ENCODE measurements at regions of chr17 and their contacts with region 1.

Region 1: DNA sequence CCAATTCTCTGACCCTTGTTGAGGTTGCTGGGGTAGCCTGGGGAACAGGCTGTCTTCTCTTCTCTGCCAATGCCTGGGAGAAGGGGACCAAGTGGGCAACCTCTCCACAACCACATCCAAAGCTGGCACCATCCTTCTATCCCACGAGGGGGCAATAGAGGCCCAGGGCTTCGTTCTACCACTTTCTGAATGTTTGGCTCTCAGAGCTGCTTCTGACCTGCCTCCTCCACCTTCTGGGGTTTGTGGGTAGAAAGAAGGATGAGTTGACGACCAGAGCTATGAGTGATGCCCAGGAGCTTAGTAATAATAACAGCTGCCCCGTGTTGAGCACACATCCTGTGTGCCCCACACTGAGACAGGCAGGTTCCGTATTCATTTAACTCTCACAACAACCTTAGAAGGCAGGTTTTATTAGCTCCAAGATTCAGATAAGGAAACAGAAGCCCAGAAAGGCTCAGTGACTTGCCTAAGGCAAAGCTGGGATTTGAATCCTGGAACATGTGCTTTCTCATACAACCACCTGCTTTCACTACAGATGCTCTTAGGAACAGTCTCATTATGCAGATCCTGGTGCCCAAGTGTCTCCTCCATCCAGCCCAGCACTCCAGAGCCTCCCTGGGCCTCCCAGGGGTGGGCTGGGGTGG is 11.1 kb downstream of the TSPOAP1 start:
- DNase-seq: peak; percentile 81

Region 2: GRCh38 chr17:58136669-58137283 is 180.8 kb before region 1 on chr17:
- CTCF ChIA-PET with region 1: no interaction called
- POLR2A ChIA-PET with region 1: no interaction called
- DNase-seq: peak; percentile 69

Region 3: GRCh38 chr17:58303971-58304725 is 13.4 kb before region 1 on chr17:
- CTCF ChIA-PET with region 1: interaction called, 17 read pairs
- POLR2A ChIA-PET with region 1: interaction called, 3 read pairs
- DNase-seq: peak; percentile 92

Region 4: DNA sequence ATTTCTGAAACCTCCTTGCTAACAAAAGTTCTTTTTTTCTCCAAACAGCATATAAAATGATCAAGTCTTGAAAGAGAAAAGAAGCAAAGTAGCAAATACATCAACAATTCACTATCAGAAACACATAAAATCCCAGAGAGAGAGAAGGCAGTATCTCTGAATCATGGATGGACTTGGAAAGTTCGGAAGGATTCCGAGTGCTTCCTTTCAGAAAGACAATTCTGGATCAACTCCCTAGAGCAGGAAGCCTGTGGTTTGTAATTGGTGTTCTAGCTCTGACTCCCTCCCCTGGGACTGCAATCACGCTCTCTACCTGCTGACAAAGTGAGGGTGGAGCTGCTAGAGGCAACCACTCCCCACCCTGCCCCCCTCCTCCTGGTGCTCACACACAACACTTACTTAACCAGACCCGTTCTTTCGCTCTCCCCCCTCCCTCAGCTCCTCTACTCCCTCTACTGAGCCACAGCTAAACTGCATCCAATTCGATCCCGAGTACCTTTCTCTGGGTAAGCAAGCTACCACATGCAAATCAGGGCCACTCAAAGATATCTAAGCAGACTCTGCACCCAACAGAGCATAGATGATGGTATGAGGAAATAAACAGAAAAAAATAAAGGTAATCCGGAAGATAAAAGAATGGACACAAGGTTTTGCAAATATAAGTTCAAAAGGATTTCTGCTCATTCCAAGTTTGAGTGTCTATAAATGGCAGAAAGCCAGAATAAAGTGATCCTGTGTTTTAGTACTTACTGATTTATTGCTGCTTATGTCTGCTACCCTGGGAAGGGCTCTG is 100.0 kb after region 1 on chr17 and contains the start of gene RNF43:
- CTCF ChIA-PET with region 1: interaction called, 10 read pairs
- POLR2A ChIA-PET with region 1: interaction called, 7 read pairs
- DNase-seq: peak; percentile 92

Region 5: DNA sequence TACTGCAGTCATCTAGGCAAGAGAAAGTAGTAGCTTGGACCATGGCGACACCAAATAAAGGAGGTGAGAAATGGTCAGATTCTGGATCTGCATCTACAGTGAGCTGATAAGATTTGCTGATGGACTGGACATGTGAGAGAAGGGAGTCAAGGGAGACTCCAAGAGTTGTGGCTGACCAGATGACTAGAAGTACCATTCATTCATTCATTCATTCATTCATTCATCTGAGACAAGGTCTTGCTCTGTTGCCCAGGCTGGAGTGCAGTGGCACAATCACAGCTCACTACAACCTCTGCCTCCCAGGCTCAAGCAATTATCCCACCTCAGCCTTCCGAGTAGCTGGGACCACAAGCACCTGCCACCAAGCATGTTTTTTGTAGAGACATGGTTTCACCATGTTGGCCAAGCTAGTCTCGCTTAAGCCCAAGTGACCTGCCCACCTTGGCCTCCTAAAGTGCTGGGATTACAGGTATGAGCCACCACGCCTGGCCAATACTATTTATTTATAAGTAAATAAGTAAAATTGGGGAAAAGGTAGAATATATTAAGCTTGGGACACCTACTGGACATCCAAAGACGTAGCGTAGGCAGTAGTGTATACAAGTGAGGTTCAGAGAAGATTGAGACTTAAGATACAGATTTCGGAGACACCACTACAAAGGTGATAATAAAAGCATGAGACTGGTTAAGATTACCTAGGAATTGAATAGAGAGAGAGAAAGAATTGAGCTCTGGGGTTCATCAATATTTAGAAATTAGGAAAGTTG is 115.4 kb after region 1 on chr17:
- CTCF ChIA-PET with region 1: interaction called, 13 read pairs
- POLR2A ChIA-PET with region 1: no interaction called
- DNase-seq: no peak

Region 6: DNA sequence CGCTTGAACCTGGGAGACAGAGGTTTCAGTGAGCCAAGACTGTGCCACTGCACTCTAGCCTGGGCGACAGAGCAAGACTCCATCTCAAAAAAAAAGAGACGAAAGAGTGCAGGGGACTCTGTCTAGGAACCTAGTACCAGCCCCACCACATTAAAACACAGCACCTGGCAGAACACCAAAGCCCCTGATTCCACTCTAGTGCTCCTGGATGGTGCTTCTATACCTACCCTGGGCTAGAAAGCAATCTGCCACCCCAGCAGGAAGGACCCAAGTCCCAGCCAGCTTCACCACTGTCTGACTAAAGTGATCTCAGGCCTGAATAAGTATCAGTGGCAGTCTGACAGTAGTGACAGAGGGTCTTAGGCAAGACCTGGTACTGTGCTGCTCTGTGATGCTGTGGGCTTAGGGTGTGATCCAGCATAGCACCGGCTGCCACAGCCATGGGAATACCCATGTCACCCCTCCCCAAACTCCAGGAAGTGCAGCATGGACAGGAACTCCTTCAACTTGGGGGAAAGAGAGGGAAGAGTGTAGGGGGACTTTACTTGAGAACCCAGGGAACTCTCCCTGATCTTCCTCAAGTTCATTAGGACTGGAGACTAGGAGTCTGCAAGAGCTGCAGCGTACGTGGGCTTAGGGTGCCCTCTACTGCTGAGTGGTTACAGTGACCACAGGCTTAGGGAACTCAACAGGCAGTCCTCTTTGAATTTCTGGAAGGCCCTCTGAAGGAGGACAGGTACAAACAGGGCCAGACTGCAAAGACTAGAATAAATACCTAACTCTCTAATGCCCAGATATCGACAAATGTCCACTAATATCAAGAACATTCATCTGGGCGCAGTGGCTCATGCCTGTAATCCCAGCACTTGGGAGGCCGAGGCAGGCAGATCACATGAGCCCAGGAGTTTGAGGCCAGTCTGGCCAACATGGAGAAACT is 129.8 kb after region 1 on chr17:
- CTCF ChIA-PET with region 1: interaction called, 15 read pairs
- POLR2A ChIA-PET with region 1: interaction called, 3 read pairs
- DNase-seq: peak; percentile 78

Region 7: DNA sequence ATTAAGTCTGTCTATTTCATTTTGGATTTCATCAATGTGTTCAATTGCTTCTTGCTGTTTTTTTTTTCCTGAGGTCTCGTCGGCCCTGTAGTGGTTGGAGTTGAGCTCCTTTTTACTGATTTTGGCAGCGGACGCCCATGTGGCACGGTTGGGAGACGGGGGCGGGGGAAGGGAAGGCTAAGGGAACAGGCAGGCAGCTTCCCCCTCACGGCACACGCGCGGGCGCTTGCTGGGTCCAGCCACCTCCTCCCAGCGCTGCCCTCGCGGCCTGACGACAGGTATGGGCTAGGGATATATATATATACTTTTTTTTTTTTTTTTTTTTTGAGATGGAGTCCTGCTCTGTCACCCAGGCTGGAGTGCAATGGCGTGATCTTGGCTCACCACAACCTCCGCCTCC is 159.3 kb after region 1 on chr17:
- CTCF ChIA-PET with region 1: no interaction called
- POLR2A ChIA-PET with region 1: no interaction called
- DNase-seq: no peak